Activated CD8-positive, alpha-beta memory T cell treated with anti-CD3 and anti-CD28 coated beads, Interleukin-2, amount 10 ng/mL, durations not matched to agents 7 days and 5 days (primary cell): ENCODE measurements at regions of chr17 and their contacts with region 1.

Region 1: GRCh38 chr17:73231841-73232586 is 29.7 kb downstream of the CPSF4L start:
- DNase-seq: peak; percentile 96
- ATAC-seq: peak; percentile 91
- H3K4me3 Mint-ChIP-seq: peak overlapping the region; percentile 85
- H3K27ac Mint-ChIP-seq: peak overlapping the region; percentile 89
- H3K4me1 Mint-ChIP-seq: peaks cover 56% of the 10 kb centered on the region
- H3K27me3 Mint-ChIP-seq: no peaks in the 10 kb centered on the region

Region 2: GRCh38 chr17:73208139-73208827 is 23.7 kb before region 1 on chr17:
- CTCF ChIA-PET with region 1: interaction called, 16 read pairs
- DNase-seq: no peak
- ATAC-seq: no peak
- H3K4me3 Mint-ChIP-seq: no peak overlapping the region
- H3K27ac Mint-ChIP-seq: no peak overlapping the region
- H3K4me1 Mint-ChIP-seq: peaks cover 30% of the 10 kb centered on the region
- H3K27me3 Mint-ChIP-seq: no peaks in the 10 kb centered on the region